Dorsolateral prefrontal cortex (tissue), 120 donors: ENCODE measurements at regions of chr19 and their contacts with region 1.

Region 1: DNA sequence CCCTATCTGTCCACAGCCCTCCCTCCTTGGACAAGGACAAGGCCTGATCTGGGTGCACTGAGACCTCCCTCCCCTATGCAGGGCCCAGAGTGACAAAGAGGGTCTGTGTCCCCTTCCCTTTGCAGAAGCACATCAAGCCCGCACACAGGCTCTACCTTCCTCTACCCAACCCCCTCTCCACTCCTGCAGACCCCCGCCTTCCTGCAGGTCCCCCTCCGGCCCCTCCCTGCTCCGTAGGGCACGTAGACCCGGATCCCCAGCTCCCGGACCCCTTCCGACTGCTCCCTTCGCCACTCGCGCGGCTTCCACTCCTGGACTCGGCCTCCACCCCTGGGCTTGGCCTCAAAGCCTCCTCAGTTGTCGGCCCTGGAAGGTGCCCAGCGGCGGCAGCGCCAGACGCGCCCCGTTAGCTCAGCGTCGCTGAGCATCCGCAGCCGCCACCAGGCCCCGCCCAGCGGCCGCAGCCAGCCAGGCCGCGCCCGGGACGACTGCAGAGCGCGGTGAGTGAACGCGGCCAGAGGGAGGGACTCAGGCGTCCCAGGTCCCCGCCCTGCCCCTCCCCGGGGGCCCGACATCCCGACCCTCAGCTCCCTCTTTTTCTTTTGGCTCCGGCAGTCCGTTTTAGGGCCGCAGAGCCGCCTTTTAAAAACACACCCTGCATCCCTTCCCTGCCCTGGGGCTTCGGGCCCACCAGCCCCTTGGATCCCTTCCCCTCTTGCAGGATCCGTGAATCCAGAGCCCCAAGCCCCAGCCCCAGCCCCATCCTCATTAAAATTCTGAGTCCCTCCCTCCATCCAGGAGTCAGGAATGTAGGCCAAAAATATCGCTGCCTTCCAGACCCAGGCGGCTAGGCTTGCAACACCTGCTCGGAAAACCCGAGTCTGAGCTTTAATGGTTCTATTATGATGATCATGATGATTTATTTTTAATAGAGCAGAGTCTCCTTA is 1.5 kb upstream of the MYADM start:
- DNase-seq: peak; percentile 70 to 89 (median 79)
- H3K4me3 ChIP-seq: peak overlapping the region; percentile 51 to 88 (median 73)
- H3K27ac ChIP-seq: peak overlapping the region; percentile 83 to 99 (median 97)
- H3K27me3 ChIP-seq: no peaks in the 10 kb centered on the region
- CTCF ChIP-seq: peak in 28 of 56 donors; percentile 6 to 44 (median 23)

Region 2: DNA sequence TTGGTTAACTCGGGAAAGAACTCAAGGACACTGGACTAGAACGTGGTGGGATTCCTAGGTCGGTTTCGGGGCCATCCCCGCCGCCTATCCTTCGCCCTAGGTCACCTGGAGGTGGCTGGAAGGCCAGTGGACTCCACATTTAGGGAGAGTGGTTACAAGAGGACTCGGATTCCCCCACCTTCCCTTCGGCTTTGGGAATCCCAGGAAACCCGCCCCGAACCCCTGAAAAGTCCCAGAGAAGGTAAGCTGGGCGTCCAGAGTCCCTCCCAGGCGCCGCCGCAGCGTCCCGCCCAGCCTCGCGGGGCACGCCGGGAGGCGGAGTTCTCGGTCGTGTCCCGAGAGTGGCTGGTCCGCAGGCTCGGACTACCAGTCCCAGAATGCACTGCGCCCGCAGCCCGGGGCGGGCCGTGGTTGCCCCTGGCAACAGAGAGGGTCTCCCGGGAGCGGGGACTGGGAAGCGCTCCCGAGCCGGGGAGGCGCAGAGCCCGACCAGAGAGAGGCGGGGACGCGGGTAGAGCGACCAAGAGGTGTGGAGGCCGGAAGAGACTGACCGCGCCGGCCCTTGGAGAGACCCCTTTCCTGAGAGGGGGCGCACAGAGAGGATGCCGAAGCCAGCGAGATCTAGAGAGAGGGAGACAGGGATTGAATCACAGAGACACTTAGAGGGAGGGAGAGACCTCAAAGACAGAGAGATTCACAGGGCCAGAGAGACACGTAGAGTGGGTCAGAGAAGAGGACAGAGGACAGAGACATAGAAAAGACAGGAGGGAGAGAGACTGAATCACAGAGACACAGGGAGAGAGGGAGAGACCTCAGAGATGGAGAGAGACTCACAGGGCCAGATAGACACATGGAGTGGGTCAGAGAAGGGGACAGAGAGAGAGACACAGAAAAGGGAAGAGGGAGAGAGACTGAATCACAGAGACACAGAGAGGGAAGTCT is 13.2 kb after region 1 on chr19:
- intact Hi-C with region 1: loop called in 1 of 2 experiments (anchors 1 kb)
- DNase-seq: peak; percentile 92 to 99 (median 94)
- H3K4me3 ChIP-seq: peak overlapping the region; percentile 32 to 93 (median 70)
- H3K27ac ChIP-seq: peak overlapping the region in 36 of 59 donors; percentile 12 to 76 (median 52)
- H3K27me3 ChIP-seq: peaks cover 0 to 26% (median 6%) of the 10 kb centered on the region in 45 donors
- CTCF ChIP-seq: peak in 45 of 56 donors; percentile 8 to 65 (median 35)